MCF 10A (cell line): ENCODE measurements at regions of chr19 and their contacts with region 1.

Region 1: DNA sequence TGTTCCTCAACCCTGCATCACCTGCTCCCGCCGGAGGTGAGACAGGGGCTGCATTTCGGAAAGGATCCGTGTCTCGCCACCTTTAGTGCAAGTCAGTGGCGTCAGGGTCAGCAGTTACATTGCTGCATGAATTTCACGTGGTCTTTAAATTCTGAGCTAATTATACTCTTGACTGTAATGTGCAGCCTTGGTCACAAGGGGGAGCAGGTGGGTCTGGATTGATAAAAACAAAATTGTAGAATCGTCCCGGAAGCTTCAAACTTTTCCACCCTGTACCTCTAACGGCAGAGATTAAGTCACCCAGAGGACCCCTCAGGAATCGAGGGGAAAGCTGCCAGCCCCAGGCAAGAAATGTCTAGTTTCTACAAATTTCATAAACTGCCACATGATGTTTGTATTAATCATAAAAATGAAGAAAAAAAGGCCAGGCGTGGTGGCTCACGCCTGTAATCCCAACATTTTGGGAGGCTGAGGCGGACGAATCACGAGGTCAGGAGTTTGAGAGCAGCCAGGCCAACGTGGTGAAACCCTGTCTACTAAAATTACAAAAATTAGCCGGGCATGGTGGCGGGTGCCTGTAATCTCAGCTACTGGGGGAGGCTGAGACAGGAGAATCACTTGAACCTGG is 20.2 kb downstream of the BBC3 start:
- DNase-seq: peak; percentile 86
- H3K4me3 Mint-ChIP-seq: peak overlapping the region; percentile 31
- H3K27ac Mint-ChIP-seq: peak overlapping the region; percentile 88
- H3K4me1 Mint-ChIP-seq: peaks cover 7% of the 10 kb centered on the region
- H3K27me3 Mint-ChIP-seq: no peaks in the 10 kb centered on the region
- CTCF ChIP-seq: peak; percentile 77

Region 2: DNA sequence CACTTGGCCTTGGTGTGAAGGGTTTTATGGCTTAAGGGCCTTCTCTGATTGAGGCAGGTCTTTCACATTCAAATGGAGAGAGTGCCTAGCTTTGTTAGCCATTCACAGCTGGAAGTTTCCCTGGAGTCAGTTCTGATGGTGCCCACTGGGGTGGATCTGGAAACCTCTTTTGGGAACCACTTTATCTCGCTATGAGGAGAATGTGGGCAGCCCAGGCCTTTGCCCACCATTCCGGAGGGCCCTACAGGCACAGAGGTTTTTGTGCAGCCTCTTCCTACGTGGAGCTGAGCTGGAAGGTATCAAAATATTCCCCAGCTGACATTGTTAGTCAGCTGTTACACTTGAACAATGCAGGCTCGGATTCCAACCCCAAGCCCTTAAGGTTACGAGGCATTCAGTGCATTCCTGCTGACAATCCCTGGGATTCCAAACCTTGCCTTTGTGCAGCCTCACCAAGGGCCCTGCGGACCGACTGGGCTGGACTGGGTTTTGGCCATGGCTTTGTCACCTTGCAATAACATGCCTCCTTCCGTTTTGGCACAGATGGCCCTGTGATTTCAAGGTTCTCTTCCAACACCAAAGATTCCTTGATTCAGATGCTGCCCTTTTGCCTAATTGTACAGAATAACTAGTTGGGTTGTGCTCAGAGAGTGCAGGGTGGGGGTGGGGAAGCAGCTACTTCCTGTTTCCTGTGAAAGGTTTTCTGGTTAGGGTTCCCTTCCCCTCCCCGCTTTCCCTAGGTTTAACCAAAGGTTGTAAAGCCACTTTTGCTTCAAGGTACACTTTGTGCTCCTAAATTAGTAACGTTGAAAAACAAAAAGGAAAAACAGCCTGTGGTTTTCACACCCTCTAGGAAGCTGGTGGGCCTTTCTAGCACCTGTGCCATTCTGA is 53.1 kb before region 1 on chr19:
- CTCF ChIA-PET with region 1: interaction called, 10 read pairs
- POLR2A ChIA-PET with region 1: interaction called, 13 read pairs
- intact Hi-C with region 1: no loop called
- DNase-seq: no peak
- H3K4me3 Mint-ChIP-seq: no peak overlapping the region
- H3K27ac Mint-ChIP-seq: peak overlapping the region; percentile 20
- H3K4me1 Mint-ChIP-seq: peaks cover 23% of the 10 kb centered on the region
- H3K27me3 Mint-ChIP-seq: no peaks in the 10 kb centered on the region
- CTCF ChIP-seq: no peak

Region 3: GRCh38 chr19:47197141-47197540 is 13.7 kb before region 1 on chr19:
- CTCF ChIA-PET with region 1: interaction called, 20 read pairs
- POLR2A ChIA-PET with region 1: no interaction called
- intact Hi-C with region 1: no loop called
- DNase-seq: no peak
- H3K4me3 Mint-ChIP-seq: no peak overlapping the region
- H3K27ac Mint-ChIP-seq: no peak overlapping the region
- H3K4me1 Mint-ChIP-seq: no peaks in the 10 kb centered on the region
- H3K27me3 Mint-ChIP-seq: no peaks in the 10 kb centered on the region
- CTCF ChIP-seq: no peak

Region 4: GRCh38 chr19:47231215-47231984 is 20.6 kb after region 1 on chr19:
- CTCF ChIA-PET with region 1: interaction called, 46 read pairs
- POLR2A ChIA-PET with region 1: interaction called, 56 read pairs
- intact Hi-C with region 1: loop called (anchors 1 kb)
- DNase-seq: peak; percentile 76
- H3K4me3 Mint-ChIP-seq: no peak overlapping the region
- H3K27ac Mint-ChIP-seq: peak overlapping the region; percentile 87
- H3K4me1 Mint-ChIP-seq: peaks cover 12% of the 10 kb centered on the region
- H3K27me3 Mint-ChIP-seq: no peaks in the 10 kb centered on the region
- CTCF ChIP-seq: no peak

Region 5: DNA sequence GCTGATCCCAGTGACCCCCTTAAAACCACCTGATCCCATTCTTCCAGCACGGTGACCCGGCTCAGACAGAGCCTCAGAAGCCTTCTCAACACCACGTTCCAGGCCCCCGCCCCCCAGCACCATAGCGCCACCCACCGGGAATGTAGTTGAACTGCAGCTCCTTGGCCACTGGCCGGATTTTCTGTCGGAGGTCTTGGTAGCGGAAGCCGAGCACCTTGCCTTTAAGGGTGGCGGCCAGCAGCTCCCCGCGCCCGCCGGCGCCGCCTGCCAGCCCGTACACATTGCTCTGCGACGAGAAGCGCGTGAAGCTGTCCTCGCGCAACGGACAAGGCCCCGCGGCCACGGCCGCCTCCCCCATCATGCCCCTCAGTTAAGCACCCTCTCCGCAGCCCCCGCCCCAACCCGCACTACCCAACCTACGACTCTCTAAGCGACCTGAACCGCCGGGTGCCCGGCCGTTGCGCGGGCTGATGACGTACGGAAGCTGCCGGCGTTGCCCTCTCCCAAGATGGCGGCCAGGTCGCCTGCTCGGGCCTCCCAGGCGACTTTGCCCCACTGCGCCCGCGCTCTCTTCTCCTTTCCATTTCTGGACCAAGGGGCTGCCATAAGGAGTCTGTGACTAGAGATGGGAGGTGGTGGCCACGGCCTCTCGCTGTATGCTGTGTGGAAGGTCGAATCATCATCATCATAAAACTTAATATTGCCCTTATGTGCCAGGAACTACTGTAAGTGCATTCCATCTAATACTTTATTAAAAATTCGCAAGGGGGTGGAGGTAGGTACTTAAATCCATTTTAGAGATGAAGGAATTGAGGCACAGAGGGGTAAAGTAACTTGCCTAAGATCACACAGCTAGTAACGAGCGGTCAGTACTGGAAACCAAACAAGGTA is 273.2 kb after region 1 on chr19 and contains the start of gene KPTN:
- CTCF ChIA-PET with region 1: no interaction called
- POLR2A ChIA-PET with region 1: no interaction called
- intact Hi-C with region 1: no loop called
- DNase-seq: peak; percentile 87
- H3K4me3 Mint-ChIP-seq: peak within 1 kb of the TSS; percentile 99
- H3K27ac Mint-ChIP-seq: peak within 1 kb of the TSS; percentile 99
- H3K4me1 Mint-ChIP-seq: peaks cover 5% of the 10 kb centered on the region
- H3K27me3 Mint-ChIP-seq: no peaks in the 10 kb centered on the region
- CTCF ChIP-seq: peak; percentile 99
- total RNA-seq, gene KPTN: 9.7 and 17.6 TPM in 2 replicates